Activated T-helper 1 cell treated with anti-CD3 and anti-CD28 coated beads, Interleukin-12 subunit alpha, Interleukin-12 subunit beta, Interleukin-2, Interleukin-4 antibody, amounts not matched to agents 30 ng/mL and 10 ng/mL and 1 ng/mL, durations not matched to agents 14 hours and 24 hours and 36 hours (primary cell): ENCODE measurements at regions of chr20 and their contacts with region 1.

Region 1: GRCh38 chr20:59087829-59088433 is 45.3 kb upstream of the PRELID3B start:
- DNase-seq: peak; percentile 71
- H3K4me3 Mint-ChIP-seq: no peak overlapping the region
- H3K27ac Mint-ChIP-seq: no peak overlapping the region
- H3K4me1 Mint-ChIP-seq: peaks cover 6% of the 10 kb centered on the region
- H3K27me3 Mint-ChIP-seq: peaks cover 14% of the 10 kb centered on the region

Region 2: DNA sequence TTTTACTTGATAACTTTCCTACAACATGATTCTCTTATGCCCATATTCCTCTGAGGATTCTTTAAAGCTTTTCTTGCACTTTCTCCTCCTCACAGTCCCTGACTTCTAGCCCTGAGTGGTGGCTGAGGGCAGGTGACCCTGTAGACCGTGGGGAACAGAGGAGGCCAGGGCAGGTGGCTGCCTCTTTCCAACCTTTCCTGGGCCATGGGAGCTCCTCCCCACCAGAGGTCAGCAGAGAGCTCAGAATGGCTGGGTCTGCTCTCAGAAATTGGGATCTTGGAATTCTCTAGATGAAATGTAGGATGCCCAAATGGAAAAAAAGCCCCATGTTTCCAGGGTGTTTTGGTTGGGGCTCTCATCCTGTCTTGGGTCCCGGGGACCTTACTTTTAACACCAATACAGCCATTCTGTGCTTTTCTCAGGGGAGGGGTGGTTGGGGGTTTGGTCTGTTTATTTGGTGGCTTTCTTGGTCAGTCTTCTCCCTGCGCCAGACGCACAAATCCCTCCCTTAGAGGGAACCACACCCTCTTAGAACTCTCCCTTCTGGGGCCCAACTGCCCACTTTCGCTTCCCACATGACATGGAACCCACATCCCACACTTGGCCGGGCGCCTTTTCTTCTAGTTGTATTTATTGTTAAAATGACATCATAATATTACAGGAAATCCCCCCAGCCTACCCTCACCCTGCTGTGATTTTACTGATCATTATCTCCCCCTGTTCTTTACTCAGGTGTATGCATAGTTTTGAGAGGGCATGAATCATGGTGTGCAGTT is 217.5 kb before region 1 on chr20:
- intact Hi-C with region 1: loop called (anchors 5 kb)
- DNase-seq: peak; percentile 17
- H3K4me3 Mint-ChIP-seq: no peak overlapping the region
- H3K27ac Mint-ChIP-seq: no peak overlapping the region
- H3K4me1 Mint-ChIP-seq: peaks cover 4% of the 10 kb centered on the region
- H3K27me3 Mint-ChIP-seq: peaks cover 32% of the 10 kb centered on the region

Region 3: GRCh38 chr20:59149651-59150504 is 61.9 kb after region 1 on chr20:
- intact Hi-C with region 1: loop called (anchors 1 kb)
- DNase-seq: peak; percentile 72
- H3K4me3 Mint-ChIP-seq: peak overlapping the region; percentile 57
- H3K27ac Mint-ChIP-seq: peak overlapping the region; percentile 92
- H3K4me1 Mint-ChIP-seq: peaks cover 72% of the 10 kb centered on the region
- H3K27me3 Mint-ChIP-seq: no peaks in the 10 kb centered on the region

Region 4: DNA sequence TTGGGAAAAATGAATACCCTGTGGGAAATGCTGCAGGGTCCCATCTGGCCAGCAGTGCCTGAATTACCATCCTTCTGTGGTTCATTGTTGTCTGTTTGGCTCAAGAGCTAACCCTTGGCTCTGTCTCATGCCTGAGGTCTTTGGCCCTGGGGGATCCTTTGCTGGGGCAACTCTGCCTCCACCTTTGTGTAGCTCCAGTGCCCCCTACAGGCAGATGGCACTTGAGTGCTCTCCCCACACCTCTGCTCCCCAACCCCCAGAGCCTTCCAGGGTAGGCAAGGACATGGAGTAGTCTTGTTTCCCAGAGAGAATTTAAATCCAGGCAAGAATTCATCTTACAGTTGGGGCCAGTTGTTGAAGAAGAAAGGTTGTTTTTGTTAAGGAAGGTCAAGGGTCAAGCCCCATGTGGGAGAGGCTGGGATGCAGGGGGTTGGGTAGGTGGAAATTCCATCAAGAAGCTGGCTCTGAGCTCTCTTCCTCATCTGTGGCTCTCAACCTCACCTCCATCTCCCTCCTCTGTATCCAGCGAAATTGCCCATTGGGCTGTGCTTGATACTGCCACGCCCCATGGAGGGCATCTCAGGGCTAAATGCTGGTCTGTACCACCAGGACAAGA is 119.9 kb after region 1 on chr20:
- intact Hi-C with region 1: loop called (anchors 1 kb)
- DNase-seq: peak; percentile 65
- H3K4me3 Mint-ChIP-seq: no peak overlapping the region
- H3K27ac Mint-ChIP-seq: peak overlapping the region; percentile 49
- H3K4me1 Mint-ChIP-seq: peaks cover 13% of the 10 kb centered on the region
- H3K27me3 Mint-ChIP-seq: no peaks in the 10 kb centered on the region

Region 5: DNA sequence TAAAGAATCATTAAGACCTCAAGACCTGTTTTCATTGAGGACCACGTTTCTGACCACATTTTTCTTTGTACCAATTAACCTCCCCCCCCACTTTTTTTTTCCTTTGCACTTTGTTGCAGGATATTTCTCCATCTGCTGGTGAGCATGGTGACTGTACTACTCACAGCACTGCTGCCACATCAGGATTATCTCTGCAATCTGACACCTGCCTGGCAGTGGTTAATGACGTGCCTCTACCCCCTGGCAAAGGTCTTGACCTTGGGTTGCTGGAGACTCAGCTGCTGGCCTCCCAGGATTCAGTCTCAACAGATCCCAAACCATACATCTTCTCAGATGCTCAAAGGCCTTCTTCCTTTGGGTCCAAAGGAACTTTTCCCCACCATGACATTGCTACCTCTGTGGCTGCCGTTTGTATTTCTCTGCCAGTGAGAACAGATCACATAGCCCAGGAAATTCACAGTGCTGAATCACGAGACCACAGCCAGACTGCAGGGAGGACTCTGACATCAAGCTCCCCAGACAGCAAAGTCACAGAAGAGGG is 165.9 kb after region 1 on chr20:
- intact Hi-C with region 1: loop called (anchors 1 kb)
- DNase-seq: peak; percentile 27
- H3K4me3 Mint-ChIP-seq: peak overlapping the region; percentile 72
- H3K27ac Mint-ChIP-seq: peak overlapping the region; percentile 91
- H3K4me1 Mint-ChIP-seq: peaks cover 48% of the 10 kb centered on the region
- H3K27me3 Mint-ChIP-seq: peaks cover 3% of the 10 kb centered on the region